ENCODE measurements at regions of chr16 and their contacts with region 1.

Region 1: GRCh38 chr16:15643048-15643945 is at the start of gene MARF1:
- DNase-seq: peak; percentile 98 to 100 (median 99)
- ATAC-seq: peak; percentile 96
- H3K4me3 ChIP-seq: peak within 1 kb of the TSS; percentile 100
- H3K4me3 Mint-ChIP-seq: peak within 1 kb of the TSS; percentile 88 to 96 (median 92)
- H3K27ac ChIP-seq: peak within 1 kb of the TSS; percentile 99
- H3K27ac Mint-ChIP-seq: peak within 1 kb of the TSS; percentile 93 to 99 (median 98)
- H3K4me1 ChIP-seq: peaks cover 32 to 48% of the 10 kb centered on the region in 2 donors
- H3K4me1 Mint-ChIP-seq: peaks cover 29 to 58% (median 50%) of the 10 kb centered on the region in 7 donors
- H3K27me3 ChIP-seq: no peaks in the 10 kb centered on the region
- H3K27me3 Mint-ChIP-seq: no peaks in the 10 kb centered on the region
- total RNA-seq, gene MARF1: 93.0 to 259 (median 185) TPM

Region 2: GRCh38 chr16:15055141-15056053 is 587.9 kb before region 1 on chr16:
- CTCF ChIA-PET with region 1: no interaction called
- POLR2A ChIA-PET with region 1: no interaction called
- intact Hi-C with region 1: loop called (anchors 1 to 2 kb)
- DNase-seq: peak in 3 of 9 donors; percentile 7 to 85 (median 77)
- ATAC-seq: peak; percentile 75
- H3K4me3 ChIP-seq: peak overlapping the region; percentile 83
- H3K4me3 Mint-ChIP-seq: peak overlapping the region; percentile 76 to 93 (median 88)
- H3K27ac ChIP-seq: peak overlapping the region; percentile 80
- H3K27ac Mint-ChIP-seq: peak overlapping the region; percentile 7 to 93 (median 78)
- H3K4me1 ChIP-seq: peaks cover 8 to 12% of the 10 kb centered on the region in 2 donors
- H3K4me1 Mint-ChIP-seq: peaks cover 12 to 28% (median 21%) of the 10 kb centered on the region in 7 donors
- H3K27me3 ChIP-seq: no peaks in the 10 kb centered on the region
- H3K27me3 Mint-ChIP-seq: no peaks in the 10 kb centered on the region

Region 3: GRCh38 chr16:15434425-15435215 is 208.7 kb before region 1 on chr16 and contains the start of gene BMERB1:
- CTCF ChIA-PET with region 1: no interaction called
- POLR2A ChIA-PET with region 1: interaction called, 5 read pairs
- intact Hi-C with region 1: loop called in 1 of 2 experiments (anchors 2 kb)
- DNase-seq: peak in 5 of 9 donors; percentile 7 to 67 (median 13)
- ATAC-seq: peak; percentile 73
- H3K4me3 ChIP-seq: peak within 1 kb of the TSS; percentile 51
- H3K4me3 Mint-ChIP-seq: peak within 1 kb of the TSS; percentile 30 to 92 (median 70)
- H3K27ac ChIP-seq: no peak within 1 kb of the TSS
- H3K27ac Mint-ChIP-seq: peak within 1 kb of the TSS in 3 of 9 donors; percentile 10 to 75 (median 13)
- H3K4me1 ChIP-seq: no peaks in the 10 kb centered on the region
- H3K4me1 Mint-ChIP-seq: peaks cover 0 to 17% (median 11%) of the 10 kb centered on the region in 7 donors
- H3K27me3 ChIP-seq: peaks cover 0 to 5% of the 10 kb centered on the region in 2 donors
- H3K27me3 Mint-ChIP-seq: peaks cover 17 to 25% (median 24%) of the 10 kb centered on the region in 5 donors
- total RNA-seq, gene BMERB1: 1.3 to 8.2 (median 2.8) TPM

Region 4: DNA sequence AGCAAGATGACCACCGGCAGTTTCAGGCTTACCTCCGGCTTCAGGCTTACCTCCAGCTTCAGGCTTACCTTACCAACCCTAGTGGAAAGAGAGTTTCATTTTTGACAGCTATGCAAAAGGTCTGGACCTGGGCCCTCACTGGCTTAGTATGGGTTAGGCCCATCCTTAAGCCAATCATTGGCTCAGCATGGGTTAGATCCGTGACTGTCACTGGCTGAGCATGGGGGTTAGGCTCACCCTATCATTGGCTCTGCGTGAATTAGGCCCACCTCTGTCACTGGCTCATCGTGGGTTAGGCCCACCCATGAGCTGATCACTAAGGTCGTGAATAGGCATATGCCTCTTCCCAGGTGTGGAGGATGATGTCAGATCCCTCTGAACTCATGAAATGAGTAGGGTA is 14.9 kb after region 1 on chr16:
- CTCF ChIA-PET with region 1: interaction called, 7 read pairs
- POLR2A ChIA-PET with region 1: interaction called, 49 read pairs
- intact Hi-C with region 1: no loop called
- DNase-seq: no peak
- ATAC-seq: no peak
- H3K4me3 ChIP-seq: no peak overlapping the region
- H3K4me3 Mint-ChIP-seq: peak overlapping the region in 3 of 10 donors; percentile 13 to 55 (median 21)
- H3K27ac ChIP-seq: peak overlapping the region; percentile 64
- H3K27ac Mint-ChIP-seq: peak overlapping the region; percentile 77 to 93 (median 87)
- H3K4me1 ChIP-seq: peaks cover 5 to 26% of the 10 kb centered on the region in 2 donors
- H3K4me1 Mint-ChIP-seq: peaks cover 31 to 74% (median 66%) of the 10 kb centered on the region in 7 donors
- H3K27me3 ChIP-seq: no peaks in the 10 kb centered on the region
- H3K27me3 Mint-ChIP-seq: no peaks in the 10 kb centered on the region

Region 5: GRCh38 chr16:15704545-15704987 is 61.3 kb after region 1 on chr16:
- CTCF ChIA-PET with region 1: no interaction called
- POLR2A ChIA-PET with region 1: interaction called, 3 read pairs
- intact Hi-C with region 1: loop called (anchors 1 to 2 kb)
- DNase-seq: peak; percentile 48 to 73 (median 66)
- ATAC-seq: peak; percentile 88
- H3K4me3 ChIP-seq: no peak overlapping the region
- H3K4me3 Mint-ChIP-seq: no peak overlapping the region
- H3K27ac ChIP-seq: no peak overlapping the region
- H3K27ac Mint-ChIP-seq: peak overlapping the region; percentile 5 to 93 (median 63)
- H3K4me1 ChIP-seq: no peaks in the 10 kb centered on the region
- H3K4me1 Mint-ChIP-seq: peaks cover 3 to 22% (median 20%) of the 10 kb centered on the region in 7 donors
- H3K27me3 ChIP-seq: no peaks in the 10 kb centered on the region
- H3K27me3 Mint-ChIP-seq: no peaks in the 10 kb centered on the region

Region 6: GRCh38 chr16:15961060-15961511 is 317.8 kb after region 1 on chr16:
- CTCF ChIA-PET with region 1: no interaction called
- POLR2A ChIA-PET with region 1: no interaction called
- intact Hi-C with region 1: loop called in 1 of 2 experiments (anchors 5 kb)
- DNase-seq: peak; percentile 17 to 94 (median 91)
- ATAC-seq: peak; percentile 91
- H3K4me3 ChIP-seq: peak overlapping the region; percentile 55
- H3K4me3 Mint-ChIP-seq: peak overlapping the region; percentile 54 to 92 (median 88)
- H3K27ac ChIP-seq: peak overlapping the region; percentile 91
- H3K27ac Mint-ChIP-seq: peak overlapping the region; percentile 96 to 99 (median 98)
- H3K4me1 ChIP-seq: peaks cover 32 to 34% of the 10 kb centered on the region in 2 donors
- H3K4me1 Mint-ChIP-seq: peaks cover 31 to 86% (median 72%) of the 10 kb centered on the region in 7 donors
- H3K27me3 ChIP-seq: no peaks in the 10 kb centered on the region
- H3K27me3 Mint-ChIP-seq: no peaks in the 10 kb centered on the region